ENCODE measurements at regions of chrX and their contacts with region 1.

Region 1: DNA sequence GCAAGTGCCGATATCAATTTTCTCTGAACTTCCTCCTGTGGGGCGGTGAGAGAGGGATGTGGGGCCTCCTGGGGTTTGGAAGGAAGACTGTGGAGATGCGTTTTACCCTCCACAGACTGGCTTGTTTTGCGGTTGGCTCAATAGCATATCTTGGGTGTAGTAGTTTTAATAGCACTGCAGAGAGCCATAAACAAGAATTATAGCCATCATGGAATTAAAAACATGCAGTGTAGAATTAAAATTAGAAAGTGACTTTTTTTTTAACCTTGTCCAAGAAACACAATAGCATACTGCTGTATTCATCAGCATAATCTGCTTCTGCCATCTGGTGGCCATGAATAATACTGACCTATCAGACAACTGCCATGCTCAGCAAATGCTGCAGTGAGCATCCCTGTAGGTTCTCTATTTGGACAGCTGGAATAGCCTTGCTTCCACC is 47.3 kb upstream of the SCML1 start:
- DNase-seq: peak; percentile 56
- H3K4me3 ChIP-seq: no peak overlapping the region
- H3K27ac ChIP-seq: no peak overlapping the region
- H3K4me1 ChIP-seq: no peaks in the 10 kb centered on the region
- H3K27me3 ChIP-seq: no peaks in the 10 kb centered on the region
- CTCF ChIP-seq: peak in 3 of 4 experiments; percentile 48 to 78 (median 65)
- POLR2A ChIP-seq: no peak

Region 2: DNA sequence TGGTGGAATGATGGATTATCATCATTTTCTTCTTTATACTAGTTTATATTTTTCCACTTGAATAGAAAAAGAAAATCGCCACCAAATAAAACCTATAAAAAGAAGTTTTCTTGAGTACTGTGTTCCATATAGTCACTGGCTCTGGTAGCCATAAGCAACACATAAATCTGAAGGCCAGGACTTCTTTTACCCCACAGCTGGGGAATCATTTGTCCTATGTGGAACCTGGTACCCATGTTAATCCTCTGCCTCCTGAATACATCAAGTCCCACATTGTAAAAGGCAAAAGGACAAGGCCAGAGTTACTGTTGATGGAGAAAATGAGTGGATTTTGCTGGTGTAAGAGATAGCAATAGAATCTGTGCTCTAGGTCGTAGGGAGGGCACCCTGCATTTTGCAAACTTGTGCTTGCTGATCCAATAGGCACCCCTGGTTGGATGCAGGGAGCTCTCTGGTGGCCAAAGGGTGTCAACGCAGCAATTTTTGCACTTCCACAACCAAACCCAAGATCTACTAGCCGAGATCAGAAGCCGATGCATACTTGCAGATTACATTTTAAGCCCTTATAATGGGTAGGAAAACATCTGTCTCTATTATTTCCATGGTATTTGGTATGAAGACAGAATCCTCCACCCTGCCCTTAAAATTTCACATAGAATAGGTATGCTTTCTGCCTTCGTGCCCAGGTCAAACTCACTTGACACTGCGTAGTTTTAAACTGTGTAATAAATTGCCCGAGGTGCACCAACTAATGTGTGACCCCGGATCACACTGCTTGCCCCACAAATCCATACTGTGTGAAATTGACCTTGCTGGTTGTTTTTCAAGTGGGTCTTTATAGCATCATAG is 98.9 kb before region 1 on chrX:
- intact Hi-C with region 1: loop called (anchors 5 kb)
- DNase-seq: peak; percentile 26
- H3K4me3 ChIP-seq: no peak overlapping the region
- H3K27ac ChIP-seq: no peak overlapping the region
- H3K4me1 ChIP-seq: no peaks in the 10 kb centered on the region
- H3K27me3 ChIP-seq: no peaks in the 10 kb centered on the region
- CTCF ChIP-seq: peak in 3 of 4 experiments; percentile 39 to 62 (median 60)
- POLR2A ChIP-seq: no peak